Activated B cell treated with CpG ODN at 0.5 μM for 24 hours (primary cell): ENCODE measurements at regions of chr2 and their contacts with region 1.

Region 1: GRCh38 chr2:64635976-64636911 is 17.5 kb downstream of the SERTAD2 start:
- DNase-seq: no peak
- ATAC-seq: peak; percentile 48
- H3K4me3 Mint-ChIP-seq: peak overlapping the region; percentile 68
- H3K27ac Mint-ChIP-seq: peak overlapping the region; percentile 94
- H3K4me1 Mint-ChIP-seq: peaks cover 71% of the 10 kb centered on the region
- H3K27me3 Mint-ChIP-seq: no peaks in the 10 kb centered on the region
- CTCF ChIP-seq: no peak

Region 2: DNA sequence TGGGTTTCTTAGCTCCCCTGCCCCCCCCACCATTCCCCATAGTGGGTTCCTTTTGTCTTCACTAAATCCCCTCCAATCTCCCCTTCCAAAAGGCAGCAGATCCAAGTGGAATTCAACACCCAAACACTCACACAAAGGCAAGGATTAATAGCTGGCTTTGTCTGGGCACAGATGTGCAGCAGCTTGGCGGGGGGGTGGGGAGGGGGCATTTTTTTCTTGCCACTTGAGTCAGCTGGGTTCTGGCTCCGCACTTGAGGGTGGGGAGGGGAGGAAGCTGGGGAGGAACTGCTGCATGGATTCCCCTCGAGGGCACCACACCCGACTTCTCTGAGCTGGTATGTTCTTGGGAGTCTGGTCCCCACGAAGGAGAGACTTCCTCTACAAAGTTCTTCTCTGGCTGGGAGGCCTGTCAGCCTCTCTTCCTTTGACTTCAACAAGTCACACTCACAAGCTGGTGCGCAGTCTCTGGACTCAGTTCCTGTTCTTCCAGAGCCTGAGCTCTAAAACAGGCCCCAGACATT is 18.6 kb before region 1 on chr2:
- CTCF ChIA-PET with region 1: interaction called, 3 read pairs
- POLR2A ChIA-PET with region 1: interaction called, 13 read pairs
- intact Hi-C with region 1: no loop called
- DNase-seq: no peak
- ATAC-seq: no peak
- H3K4me3 Mint-ChIP-seq: no peak overlapping the region
- H3K27ac Mint-ChIP-seq: no peak overlapping the region
- H3K4me1 Mint-ChIP-seq: peaks cover 6% of the 10 kb centered on the region
- H3K27me3 Mint-ChIP-seq: no peaks in the 10 kb centered on the region
- CTCF ChIP-seq: no peak

Region 3: DNA sequence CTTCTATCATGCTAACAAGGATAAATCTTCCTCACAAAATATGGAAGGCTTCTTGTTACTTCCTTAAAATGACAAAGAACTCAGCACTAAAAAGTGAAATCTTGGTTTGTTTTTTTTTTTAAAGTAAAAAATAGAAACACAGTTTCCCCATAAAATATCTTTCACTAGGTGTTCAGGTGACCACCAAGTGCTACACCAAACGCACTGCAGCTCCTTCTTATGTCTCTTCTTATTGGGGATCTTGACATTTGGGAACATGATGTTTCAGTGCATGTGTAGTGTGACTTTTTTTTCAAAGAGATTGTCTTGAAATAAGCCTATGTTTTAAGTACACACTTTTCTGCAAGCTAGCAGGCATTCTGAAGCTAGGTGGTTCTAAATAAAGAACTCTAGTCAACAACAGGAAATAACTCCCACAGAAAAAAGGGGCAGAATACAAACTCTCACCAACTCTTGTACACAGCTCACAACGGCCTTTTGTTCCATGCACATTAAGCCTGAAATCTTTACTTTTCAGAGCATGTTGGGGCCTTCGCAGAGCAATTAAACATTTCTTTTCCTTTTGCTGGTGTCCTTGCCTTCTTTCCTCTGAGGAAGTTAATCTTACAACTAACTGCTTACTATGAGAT is 30.7 kb after region 1 on chr2:
- CTCF ChIA-PET with region 1: no interaction called
- POLR2A ChIA-PET with region 1: no interaction called
- intact Hi-C with region 1: no loop called
- DNase-seq: no peak
- ATAC-seq: peak; percentile 28
- H3K4me3 Mint-ChIP-seq: peak overlapping the region; percentile 3
- H3K27ac Mint-ChIP-seq: peak overlapping the region; percentile 79
- H3K4me1 Mint-ChIP-seq: peaks cover 26% of the 10 kb centered on the region
- H3K27me3 Mint-ChIP-seq: no peaks in the 10 kb centered on the region
- CTCF ChIP-seq: no peak